ENCODE measurements at regions of chr11 and their contacts with region 1.

Region 1: DNA sequence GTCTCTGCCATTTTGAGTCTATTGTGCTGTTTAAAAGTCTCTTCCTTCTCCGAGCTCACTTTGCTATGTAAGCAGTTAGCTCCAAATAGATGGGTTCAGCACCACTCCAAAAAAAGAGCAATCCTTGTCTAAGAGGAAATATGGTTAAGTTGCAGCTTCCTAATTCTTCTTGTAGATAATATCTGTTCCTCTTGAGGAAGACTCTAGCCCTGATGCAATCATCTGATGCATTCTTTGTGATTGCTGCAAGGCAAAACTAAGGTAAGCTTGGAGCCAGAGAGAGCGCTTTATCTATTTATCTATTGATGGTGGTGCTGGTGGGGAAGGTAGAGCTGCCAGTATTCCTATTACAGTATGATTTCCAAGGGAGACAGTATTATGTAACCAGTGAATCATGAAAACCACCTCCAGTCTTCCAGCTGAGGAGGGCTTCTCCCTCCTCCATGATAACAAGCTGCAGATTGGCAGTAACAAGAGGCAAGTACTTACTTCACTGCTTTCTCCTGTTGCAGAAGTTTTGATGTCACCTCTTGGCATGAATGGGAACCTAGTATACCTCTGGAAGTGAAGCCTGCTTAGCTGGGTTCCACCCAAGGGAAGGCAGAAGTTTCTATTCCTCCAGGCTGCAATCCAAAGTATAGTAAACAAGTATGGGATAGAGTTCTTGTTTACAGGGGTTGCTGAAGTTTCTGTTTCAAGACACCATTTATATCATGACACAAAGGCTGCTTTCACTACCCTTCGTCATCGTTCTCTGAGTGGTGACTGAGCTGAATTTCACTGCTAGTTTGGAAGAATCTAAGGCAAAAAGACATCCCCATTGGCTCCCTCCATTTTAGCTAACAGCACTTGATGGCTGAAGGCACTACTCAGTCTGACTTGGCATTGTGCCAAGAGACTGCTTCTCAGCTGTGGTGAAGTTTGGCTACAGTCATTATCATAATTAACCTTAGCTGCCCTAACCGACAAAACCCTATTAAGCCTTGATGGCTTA is 49.7 kb downstream of the FDX1 start:
- DNase-seq: no peak
- ATAC-seq: peak in 7 of 8 donors; percentile 42 to 65 (median 50)
- H3K4me3 ChIP-seq: no peak overlapping the region
- H3K27ac ChIP-seq: peak overlapping the region in 1 of 10 donors; percentile 49
- H3K4me1 ChIP-seq: peaks cover 0 to 25% (median 4%) of the 10 kb centered on the region in 9 donors
- H3K27me3 ChIP-seq: no peaks in the 10 kb centered on the region
- CTCF ChIP-seq: no peak

Region 2: DNA sequence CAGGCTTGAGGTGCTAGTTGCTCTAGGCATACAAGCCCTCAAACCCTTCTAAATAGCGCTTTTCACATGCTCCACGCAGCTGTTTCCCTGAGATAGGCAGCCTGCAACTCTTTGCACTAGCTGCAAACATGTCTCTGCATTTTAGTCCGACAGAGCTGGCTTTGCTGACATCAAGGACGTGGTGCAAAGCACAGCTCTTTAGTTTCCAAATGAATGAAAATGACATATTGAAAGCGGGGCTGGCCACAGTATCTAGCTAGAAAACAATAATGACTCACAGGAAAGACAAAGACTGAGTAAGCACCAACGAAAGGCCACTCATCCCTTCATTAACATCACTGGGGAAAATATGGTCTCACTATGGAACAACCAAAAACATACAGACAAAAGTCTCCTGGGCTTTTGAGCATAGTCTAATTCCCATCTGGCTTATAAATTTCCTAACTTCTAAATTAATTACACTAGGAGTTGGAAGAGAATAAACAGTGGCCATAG is 401.5 kb before region 1 on chr11:
- intact Hi-C with region 1: no loop called
- DNase-seq: no peak
- ATAC-seq: no peak
- H3K4me3 ChIP-seq: no peak overlapping the region
- H3K27ac ChIP-seq: no peak overlapping the region
- H3K4me1 ChIP-seq: peaks cover 0 to 21% (median 0%) of the 10 kb centered on the region in 9 donors
- H3K27me3 ChIP-seq: no peaks in the 10 kb centered on the region
- CTCF ChIP-seq: no peak

Region 3: DNA sequence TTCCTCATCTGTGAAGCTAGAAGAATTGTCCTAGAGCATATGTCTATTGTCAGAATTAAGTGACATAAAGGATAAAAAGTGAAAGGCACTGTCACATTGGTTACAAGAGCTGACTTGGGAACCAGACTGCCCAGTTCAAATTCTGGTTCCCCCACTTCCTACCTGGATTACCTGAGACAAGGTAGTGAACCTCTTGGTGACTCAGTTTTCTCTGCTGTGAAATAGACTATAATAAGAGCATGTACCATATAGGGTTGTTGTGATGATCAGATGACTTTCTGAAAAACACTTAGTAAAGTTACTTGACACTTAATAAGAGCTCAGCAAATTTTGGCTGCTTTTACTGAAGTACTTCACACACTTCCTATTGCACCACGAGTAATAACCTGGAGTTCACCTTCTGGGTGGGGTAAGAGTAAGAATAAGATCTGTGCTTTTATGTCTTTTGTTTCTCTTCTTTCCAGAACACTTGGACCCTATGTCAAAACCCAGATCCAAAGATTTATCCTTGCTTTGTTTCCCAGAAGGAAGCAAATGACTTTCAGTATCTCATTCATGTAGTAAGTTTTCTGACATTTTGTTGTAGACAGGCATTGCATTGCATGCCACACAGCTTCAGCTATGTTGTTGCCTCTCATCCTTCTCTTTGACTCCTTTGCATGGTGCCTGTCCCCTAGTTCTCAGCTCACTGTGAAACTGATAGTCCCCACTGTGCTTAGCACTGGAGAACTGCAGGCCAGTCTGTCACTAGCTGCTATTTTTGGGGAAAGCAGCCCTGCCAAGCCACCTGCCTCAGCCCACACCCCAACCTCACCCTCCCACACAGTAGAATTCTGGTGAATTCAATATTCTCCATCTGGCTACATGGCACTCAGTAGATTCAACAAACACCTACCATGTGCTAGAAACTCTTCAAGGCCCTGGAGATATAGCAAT is 644.3 kb after region 1 on chr11:
- intact Hi-C with region 1: loop called in 1 of 10 experiments (anchors 10 kb)
- DNase-seq: peak in 1 of 2 donors; percentile 7
- ATAC-seq: peak in 1 of 8 donors; percentile 33
- H3K4me3 ChIP-seq: no peak overlapping the region
- H3K27ac ChIP-seq: no peak overlapping the region
- H3K4me1 ChIP-seq: no peaks in the 10 kb centered on the region
- H3K27me3 ChIP-seq: no peaks in the 10 kb centered on the region
- CTCF ChIP-seq: no peak